GM12878 (cell line): ENCODE measurements at regions of chr12 and their contacts with region 1.

Region 1: GRCh38 chr12:126719912-126720705 is 1546.9 kb upstream of the TMEM132C start:
- DNase-seq: no peak
- ATAC-seq: no peak
- H3K4me3 ChIP-seq: no peak overlapping the region
- H3K27ac ChIP-seq: no peak overlapping the region
- H3K4me1 ChIP-seq: no peaks in the 10 kb centered on the region
- H3K27me3 ChIP-seq: no peaks in the 10 kb centered on the region
- CTCF ChIP-seq: no peak
- EP300 ChIP-seq: no peak
- POLR2A ChIP-seq: no peak
- RAD21 ChIP-seq: no peak

Region 2: DNA sequence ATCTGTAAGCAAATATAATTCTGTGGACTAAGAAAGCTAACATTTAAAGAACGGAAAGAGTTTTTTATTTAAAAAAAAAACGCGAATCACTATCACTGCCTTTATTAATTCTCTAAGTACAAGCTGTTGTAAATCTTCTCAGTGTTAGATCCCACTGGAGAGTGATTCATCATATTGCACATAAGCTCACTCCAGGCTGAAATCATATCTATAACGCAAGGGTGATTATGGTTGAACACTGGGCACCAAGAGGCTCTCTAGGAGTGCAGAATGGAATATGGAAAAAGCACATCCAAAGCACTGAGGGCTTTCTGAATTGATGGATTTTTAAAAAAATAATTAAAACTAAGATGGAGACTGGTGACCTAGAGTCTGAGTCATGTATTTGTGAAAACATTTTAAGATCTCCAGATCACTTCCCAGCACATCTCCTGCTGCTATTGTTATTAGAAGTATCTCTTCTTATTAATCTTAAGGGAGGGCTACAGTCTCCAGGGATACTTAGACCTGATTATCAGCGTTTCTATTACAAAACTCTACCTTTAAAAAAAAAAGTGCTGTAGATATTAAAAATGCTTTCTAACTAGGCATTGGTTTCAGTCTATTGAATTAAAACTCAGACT is 548.1 kb before region 1 on chr12:
- CTCF ChIA-PET with region 1: no interaction called
- POLR2A ChIA-PET with region 1: no interaction called
- RAD21 ChIA-PET with region 1: no interaction called
- SMC1A ChIA-PET with region 1: no interaction called
- in situ Hi-C with region 1: no loop called
- intact Hi-C with region 1: loop called (anchors 5 kb)
- DNase-seq: no peak
- ATAC-seq: no peak
- H3K4me3 ChIP-seq: no peak overlapping the region
- H3K27ac ChIP-seq: no peak overlapping the region
- H3K4me1 ChIP-seq: no peaks in the 10 kb centered on the region
- H3K27me3 ChIP-seq: no peaks in the 10 kb centered on the region
- CTCF ChIP-seq: no peak
- EP300 ChIP-seq: no peak
- POLR2A ChIP-seq: no peak
- RAD21 ChIP-seq: no peak

Region 3: DNA sequence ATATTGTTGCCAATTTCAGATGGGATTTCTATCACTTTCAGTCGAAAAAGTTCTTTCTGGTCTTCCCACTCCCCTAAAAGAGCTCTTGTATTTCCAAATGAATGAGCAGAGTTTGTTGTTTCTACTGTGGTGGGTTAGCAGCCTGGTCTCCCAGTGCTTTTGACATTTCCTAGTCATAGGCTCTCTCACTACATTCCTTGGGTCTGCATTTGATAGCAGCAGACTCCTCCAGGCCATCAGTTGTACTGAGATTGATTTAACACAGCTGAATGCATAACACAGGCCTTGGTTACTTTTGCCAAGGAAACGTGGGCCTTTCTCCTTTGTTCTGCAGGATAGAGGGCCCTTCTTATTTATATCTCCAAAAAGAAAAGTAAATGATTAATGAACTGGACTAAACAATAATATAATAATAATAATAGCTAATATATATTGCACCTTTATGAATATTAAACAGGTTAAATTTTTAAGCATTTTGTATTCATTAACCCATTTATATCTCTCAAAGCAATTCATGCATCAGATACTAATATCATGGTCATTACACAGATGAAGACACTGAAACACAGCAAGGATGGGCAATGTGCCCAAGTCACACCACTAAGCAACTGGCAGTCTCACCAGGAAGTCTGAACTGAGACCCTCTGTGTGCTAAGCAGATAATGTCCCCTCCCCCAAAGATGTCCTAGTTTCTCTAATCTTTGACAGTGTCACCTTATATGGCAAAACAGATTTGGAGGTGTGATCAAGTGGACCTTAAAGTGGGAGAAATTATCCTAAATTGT is 75.7 kb before region 1 on chr12:
- CTCF ChIA-PET with region 1: no interaction called
- POLR2A ChIA-PET with region 1: no interaction called
- RAD21 ChIA-PET with region 1: no interaction called
- SMC1A ChIA-PET with region 1: no interaction called
- in situ Hi-C with region 1: no loop called
- intact Hi-C with region 1: no loop called
- DNase-seq: no peak
- ATAC-seq: no peak
- H3K4me3 ChIP-seq: no peak overlapping the region
- H3K27ac ChIP-seq: no peak overlapping the region
- H3K4me1 ChIP-seq: no peaks in the 10 kb centered on the region
- H3K27me3 ChIP-seq: no peaks in the 10 kb centered on the region
- CTCF ChIP-seq: no peak
- EP300 ChIP-seq: no peak
- POLR2A ChIP-seq: no peak
- RAD21 ChIP-seq: no peak

Region 4: DNA sequence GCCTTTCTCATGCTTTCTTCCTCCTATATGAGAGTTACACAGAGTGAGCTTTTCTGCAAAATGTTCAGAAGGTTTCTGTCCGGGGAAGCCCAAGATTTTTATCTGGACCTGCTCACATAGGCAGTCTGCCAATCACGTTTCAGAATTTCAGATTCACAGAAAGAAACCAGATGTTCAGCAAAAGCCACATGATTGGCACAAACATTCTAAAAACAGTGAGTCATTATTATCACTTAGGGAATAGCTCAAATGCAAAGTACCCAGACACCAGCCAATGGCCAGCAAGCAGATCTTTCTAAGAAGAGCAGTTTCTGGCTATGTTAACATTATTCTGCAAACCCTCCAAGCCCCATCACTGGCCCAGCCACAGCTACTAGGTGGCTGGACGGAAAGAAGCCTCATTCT is 11.6 kb before region 1 on chr12:
- CTCF ChIA-PET with region 1: no interaction called
- POLR2A ChIA-PET with region 1: no interaction called
- RAD21 ChIA-PET with region 1: no interaction called
- SMC1A ChIA-PET with region 1: no interaction called
- in situ Hi-C with region 1: no loop called
- intact Hi-C with region 1: no loop called
- DNase-seq: no peak
- ATAC-seq: no peak
- H3K4me3 ChIP-seq: no peak overlapping the region
- H3K27ac ChIP-seq: no peak overlapping the region
- H3K4me1 ChIP-seq: no peaks in the 10 kb centered on the region
- H3K27me3 ChIP-seq: no peaks in the 10 kb centered on the region
- CTCF ChIP-seq: no peak
- EP300 ChIP-seq: no peak
- POLR2A ChIP-seq: no peak
- RAD21 ChIP-seq: no peak

Region 5: DNA sequence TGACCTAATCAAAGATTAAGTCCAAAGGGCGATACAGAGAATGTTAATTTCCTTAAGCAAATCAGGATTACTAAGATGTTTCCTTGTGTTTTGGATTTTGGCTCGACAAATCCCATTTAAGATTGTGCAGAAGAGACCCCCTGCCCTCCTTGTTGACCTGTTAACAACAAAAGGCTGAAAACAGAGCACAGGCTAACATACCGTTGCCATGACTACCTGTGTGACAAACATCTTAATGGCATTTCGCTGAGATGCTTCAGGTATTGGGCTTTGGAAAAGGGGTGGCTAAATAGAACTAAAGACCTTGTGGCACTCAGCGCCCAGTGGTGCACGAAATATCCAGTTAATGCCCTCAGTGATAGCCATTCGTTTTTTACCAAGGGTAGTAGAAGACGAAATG is 14.6 kb after region 1 on chr12:
- CTCF ChIA-PET with region 1: no interaction called
- POLR2A ChIA-PET with region 1: no interaction called
- RAD21 ChIA-PET with region 1: no interaction called
- SMC1A ChIA-PET with region 1: no interaction called
- in situ Hi-C with region 1: no loop called
- intact Hi-C with region 1: no loop called
- DNase-seq: no peak
- ATAC-seq: no peak
- H3K4me3 ChIP-seq: no peak overlapping the region
- H3K27ac ChIP-seq: no peak overlapping the region
- H3K4me1 ChIP-seq: no peaks in the 10 kb centered on the region
- H3K27me3 ChIP-seq: no peaks in the 10 kb centered on the region
- CTCF ChIP-seq: no peak
- EP300 ChIP-seq: no peak
- POLR2A ChIP-seq: no peak
- RAD21 ChIP-seq: no peak

Region 6: GRCh38 chr12:126791122-126791521 is 71.0 kb after region 1 on chr12:
- CTCF ChIA-PET with region 1: no interaction called
- POLR2A ChIA-PET with region 1: no interaction called
- RAD21 ChIA-PET with region 1: no interaction called
- SMC1A ChIA-PET with region 1: no interaction called
- in situ Hi-C with region 1: no loop called
- intact Hi-C with region 1: no loop called
- DNase-seq: no peak
- ATAC-seq: no peak
- H3K4me3 ChIP-seq: no peak overlapping the region
- H3K27ac ChIP-seq: no peak overlapping the region
- H3K4me1 ChIP-seq: no peaks in the 10 kb centered on the region
- H3K27me3 ChIP-seq: no peaks in the 10 kb centered on the region
- CTCF ChIP-seq: no peak
- EP300 ChIP-seq: no peak
- POLR2A ChIP-seq: no peak
- RAD21 ChIP-seq: no peak